MCF 10A (cell line): ENCODE measurements at regions of chr1 and their contacts with region 1.

Region 1: DNA sequence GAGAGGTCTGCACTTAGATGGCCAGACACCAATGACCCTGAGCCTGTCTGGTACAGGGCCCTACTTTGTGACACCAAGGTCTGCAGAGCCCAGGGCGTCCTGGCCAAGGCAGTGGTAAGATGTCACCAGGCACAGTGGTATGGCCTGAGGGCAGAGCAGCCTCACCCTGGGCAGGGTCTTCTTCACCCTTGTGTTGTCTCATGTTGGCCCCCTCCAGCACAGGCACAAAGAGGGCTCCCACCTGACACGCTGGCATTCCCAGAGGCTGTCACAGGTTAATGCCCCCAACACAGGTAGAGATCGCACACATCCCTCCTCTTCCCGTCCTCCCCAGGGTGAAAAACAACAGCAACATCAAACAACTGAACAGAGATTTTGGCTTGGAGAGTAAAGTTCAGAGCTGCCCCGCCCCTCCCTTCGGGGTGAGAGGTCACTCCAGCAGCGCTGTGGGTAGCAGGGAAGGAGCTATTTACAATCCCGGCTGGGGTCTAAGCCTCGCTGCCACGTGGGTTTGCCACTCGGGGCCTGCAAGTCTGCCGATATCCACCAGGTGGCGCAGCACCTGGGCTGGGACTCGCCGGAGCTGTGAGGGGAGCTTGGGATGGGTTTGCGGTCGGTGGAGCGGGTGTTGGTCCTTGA is 12.6 kb downstream of the EFNA3 start:
- DNase-seq: peak; percentile 83
- H3K4me3 Mint-ChIP-seq: no peak overlapping the region
- H3K27ac Mint-ChIP-seq: no peak overlapping the region
- H3K4me1 Mint-ChIP-seq: peaks cover 26% of the 10 kb centered on the region
- H3K27me3 Mint-ChIP-seq: peaks cover 16% of the 10 kb centered on the region
- CTCF ChIP-seq: peak; percentile 100

Region 2: GRCh38 chr1:155078469-155079209 is 12.6 kb before region 1 on chr1 and contains the start of gene EFNA3:
- CTCF ChIA-PET with region 1: interaction called, 13 read pairs
- POLR2A ChIA-PET with region 1: interaction called, 5 read pairs
- intact Hi-C with region 1: no loop called
- DNase-seq: peak; percentile 75
- H3K4me3 Mint-ChIP-seq: peak within 1 kb of the TSS; percentile 77
- H3K27ac Mint-ChIP-seq: peak within 1 kb of the TSS; percentile 57
- H3K4me1 Mint-ChIP-seq: peaks cover 37% of the 10 kb centered on the region
- H3K27me3 Mint-ChIP-seq: peaks cover 30% of the 10 kb centered on the region
- CTCF ChIP-seq: no peak
- total RNA-seq, gene EFNA3: 1.6 and 1.7 TPM in 2 replicates

Region 3: GRCh38 chr1:155117617-155118016 is 26.4 kb after region 1 on chr1:
- CTCF ChIA-PET with region 1: interaction called, 58 read pairs
- POLR2A ChIA-PET with region 1: no interaction called
- intact Hi-C with region 1: no loop called
- DNase-seq: no peak
- H3K4me3 Mint-ChIP-seq: no peak overlapping the region
- H3K27ac Mint-ChIP-seq: no peak overlapping the region
- H3K4me1 Mint-ChIP-seq: no peaks in the 10 kb centered on the region
- H3K27me3 Mint-ChIP-seq: no peaks in the 10 kb centered on the region
- CTCF ChIP-seq: no peak

Region 4: GRCh38 chr1:155135415-155136028 is 44.3 kb after region 1 on chr1 and contains the start of gene SLC50A1:
- CTCF ChIA-PET with region 1: interaction called, 161 read pairs
- POLR2A ChIA-PET with region 1: interaction called, 66 read pairs
- intact Hi-C with region 1: no loop called
- DNase-seq: peak; percentile 94
- H3K4me3 Mint-ChIP-seq: peak within 1 kb of the TSS; percentile 80
- H3K27ac Mint-ChIP-seq: peak within 1 kb of the TSS; percentile 94
- H3K4me1 Mint-ChIP-seq: peaks cover 50% of the 10 kb centered on the region
- H3K27me3 Mint-ChIP-seq: no peaks in the 10 kb centered on the region
- CTCF ChIP-seq: no peak
- total RNA-seq, gene SLC50A1: 91.2 and 97.8 TPM in 2 replicates

Region 5: GRCh38 chr1:155158979-155159378 is 67.8 kb after region 1 on chr1:
- CTCF ChIA-PET with region 1: interaction called, 380 read pairs
- POLR2A ChIA-PET with region 1: no interaction called
- intact Hi-C with region 1: no loop called
- DNase-seq: no peak
- H3K4me3 Mint-ChIP-seq: no peak overlapping the region
- H3K27ac Mint-ChIP-seq: no peak overlapping the region
- H3K4me1 Mint-ChIP-seq: no peaks in the 10 kb centered on the region
- H3K27me3 Mint-ChIP-seq: peaks cover 15% of the 10 kb centered on the region
- CTCF ChIP-seq: no peak

Region 6: DNA sequence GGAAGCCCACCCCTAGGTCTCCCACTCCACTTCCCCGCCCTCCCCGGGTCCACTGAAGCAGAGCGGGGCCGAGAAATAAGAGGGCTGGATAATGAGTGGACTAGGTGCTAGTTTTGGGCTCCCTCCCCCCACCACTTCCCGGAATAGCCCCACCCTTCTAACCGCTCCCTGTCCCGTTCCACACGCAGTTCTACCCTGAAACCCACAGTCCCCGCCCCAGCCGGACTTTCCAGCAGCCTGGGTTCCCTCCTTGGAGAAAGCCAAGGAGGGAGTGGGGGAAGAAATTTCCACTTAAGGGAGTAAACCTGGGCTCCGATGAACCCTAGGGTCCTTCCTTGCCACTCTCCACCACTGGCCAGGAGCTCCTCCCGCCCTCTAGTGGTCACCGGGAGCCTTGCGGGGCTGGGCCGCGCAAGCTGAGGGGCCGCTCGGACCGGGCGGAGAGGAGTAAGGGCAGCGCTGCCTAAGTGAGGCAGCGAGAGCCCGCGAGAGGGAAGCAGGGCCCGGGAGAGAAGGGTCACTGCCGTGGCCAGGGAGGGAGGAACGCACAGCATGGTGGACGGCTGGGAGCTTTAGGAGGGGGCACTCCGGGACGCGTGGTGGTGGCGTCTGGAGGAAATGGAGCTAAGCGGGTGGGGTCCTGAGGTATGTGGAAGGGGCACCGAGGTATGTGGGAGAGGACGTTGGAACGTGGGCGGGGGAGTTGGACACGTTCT is 102.2 kb after region 1 on chr1:
- CTCF ChIA-PET with region 1: interaction called, 20 read pairs
- POLR2A ChIA-PET with region 1: no interaction called
- intact Hi-C with region 1: no loop called
- DNase-seq: peak; percentile 100
- H3K4me3 Mint-ChIP-seq: peak overlapping the region; percentile 94
- H3K27ac Mint-ChIP-seq: peak overlapping the region; percentile 100
- H3K4me1 Mint-ChIP-seq: peaks cover 32% of the 10 kb centered on the region
- H3K27me3 Mint-ChIP-seq: no peaks in the 10 kb centered on the region
- CTCF ChIP-seq: peak; percentile 99

Region 7: GRCh38 chr1:155420788-155421187 is 329.6 kb after region 1 on chr1:
- CTCF ChIA-PET with region 1: no interaction called
- POLR2A ChIA-PET with region 1: no interaction called
- intact Hi-C with region 1: no loop called
- DNase-seq: no peak
- H3K4me3 Mint-ChIP-seq: no peak overlapping the region
- H3K27ac Mint-ChIP-seq: no peak overlapping the region
- H3K4me1 Mint-ChIP-seq: no peaks in the 10 kb centered on the region
- H3K27me3 Mint-ChIP-seq: no peaks in the 10 kb centered on the region
- CTCF ChIP-seq: no peak